Activated naive CD4-positive, alpha-beta T cell treated with anti-CD3 and anti-CD28 coated beads for 36 hours (primary cell): ENCODE measurements at regions of chr1 and their contacts with region 1.

Region 1: DNA sequence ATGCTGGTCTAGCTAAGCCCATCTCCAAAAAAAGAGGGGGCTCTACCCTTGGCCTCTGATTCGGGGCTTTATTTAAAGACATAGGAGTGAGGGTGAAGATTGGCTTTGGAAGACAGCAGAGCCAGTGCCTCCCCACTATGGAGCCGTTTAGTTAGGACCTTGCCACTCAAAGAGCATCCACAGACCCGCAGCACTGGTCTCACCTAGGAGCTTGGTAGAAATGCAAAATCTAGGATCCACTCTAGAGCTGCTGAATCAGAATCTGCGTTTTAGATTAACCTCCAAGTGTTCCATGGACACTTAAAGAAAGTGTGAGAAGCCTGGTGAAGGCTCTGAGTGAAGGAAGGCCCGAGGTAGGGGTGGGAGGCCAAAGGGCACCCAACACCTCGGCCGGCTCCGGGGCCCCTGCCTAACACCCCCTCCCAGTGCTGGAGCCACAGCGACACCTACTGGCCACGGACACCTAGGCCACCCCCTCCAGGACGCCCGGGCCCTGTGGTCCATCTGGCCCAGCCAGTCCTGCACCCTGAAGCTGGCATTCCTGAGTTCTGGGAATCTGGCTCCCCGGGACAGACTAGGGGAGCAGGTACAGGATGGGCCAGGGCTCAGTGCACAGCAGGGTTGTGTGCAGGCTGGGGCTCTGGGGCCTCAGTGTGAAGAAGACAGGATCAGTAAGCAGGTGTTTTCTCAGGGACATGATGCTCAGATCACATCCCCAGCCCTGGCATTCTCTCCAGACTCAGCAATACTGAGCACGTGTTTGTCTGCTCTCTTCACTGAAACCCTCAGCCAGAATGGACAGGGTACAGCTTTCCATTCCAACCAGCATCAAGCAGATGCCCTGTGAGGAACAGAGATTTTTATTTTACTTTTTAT is 79.2 kb downstream of the TMEM53 start:
- DNase-seq: peak; percentile 88
- H3K4me3 Mint-ChIP-seq: no peak overlapping the region
- H3K27ac Mint-ChIP-seq: no peak overlapping the region
- H3K4me1 Mint-ChIP-seq: no peaks in the 10 kb centered on the region
- H3K27me3 Mint-ChIP-seq: peaks cover 2% of the 10 kb centered on the region

Region 2: DNA sequence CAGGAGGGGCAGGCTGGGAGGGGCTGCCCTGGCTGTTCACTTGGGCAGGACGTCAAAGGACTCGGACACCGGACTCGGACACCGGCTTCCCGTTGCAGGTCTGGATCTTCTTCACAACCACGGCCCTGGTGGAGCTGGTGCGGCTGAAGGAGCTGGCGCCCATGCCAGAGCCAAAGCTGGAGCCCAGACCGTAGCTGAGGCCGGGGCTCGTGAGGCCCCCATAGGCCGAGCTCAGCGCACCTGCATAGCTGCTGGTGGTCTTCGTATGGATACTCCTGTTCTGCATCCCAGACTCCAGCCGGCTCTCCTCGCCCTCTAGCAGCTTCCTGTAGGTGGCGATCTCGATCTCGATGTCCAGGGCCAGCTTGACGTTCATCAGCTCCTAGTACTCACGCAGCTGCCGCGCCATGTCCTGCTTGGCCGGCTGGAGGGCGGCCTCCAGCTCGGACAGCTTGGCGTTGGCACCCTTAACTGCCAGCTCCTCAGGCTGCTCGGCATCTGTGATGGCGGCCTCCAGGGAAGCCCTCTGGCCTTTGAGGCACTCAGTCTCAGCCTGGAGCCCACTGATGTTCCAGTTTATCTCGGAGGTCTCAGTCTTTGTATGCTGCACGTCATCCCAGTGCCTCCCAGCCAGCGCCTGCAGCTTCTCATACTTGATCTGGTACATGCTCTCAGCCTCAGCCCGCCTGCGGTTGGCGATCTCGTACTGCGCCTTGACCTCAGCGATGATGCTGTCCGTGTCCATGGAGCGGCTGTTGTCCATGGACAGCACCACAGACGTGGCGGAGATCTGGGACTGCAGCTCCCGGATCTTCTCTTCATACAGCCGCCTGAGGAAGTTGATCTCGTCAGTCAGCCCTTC is 491.6 kb before region 1 on chr1:
- CTCF ChIA-PET with region 1: no interaction called
- intact Hi-C with region 1: loop called (anchors 10 kb)
- DNase-seq: peak; percentile 13
- H3K4me3 Mint-ChIP-seq: no peak overlapping the region
- H3K27ac Mint-ChIP-seq: no peak overlapping the region
- H3K4me1 Mint-ChIP-seq: no peaks in the 10 kb centered on the region
- H3K27me3 Mint-ChIP-seq: peaks cover 8% of the 10 kb centered on the region

Region 3: DNA sequence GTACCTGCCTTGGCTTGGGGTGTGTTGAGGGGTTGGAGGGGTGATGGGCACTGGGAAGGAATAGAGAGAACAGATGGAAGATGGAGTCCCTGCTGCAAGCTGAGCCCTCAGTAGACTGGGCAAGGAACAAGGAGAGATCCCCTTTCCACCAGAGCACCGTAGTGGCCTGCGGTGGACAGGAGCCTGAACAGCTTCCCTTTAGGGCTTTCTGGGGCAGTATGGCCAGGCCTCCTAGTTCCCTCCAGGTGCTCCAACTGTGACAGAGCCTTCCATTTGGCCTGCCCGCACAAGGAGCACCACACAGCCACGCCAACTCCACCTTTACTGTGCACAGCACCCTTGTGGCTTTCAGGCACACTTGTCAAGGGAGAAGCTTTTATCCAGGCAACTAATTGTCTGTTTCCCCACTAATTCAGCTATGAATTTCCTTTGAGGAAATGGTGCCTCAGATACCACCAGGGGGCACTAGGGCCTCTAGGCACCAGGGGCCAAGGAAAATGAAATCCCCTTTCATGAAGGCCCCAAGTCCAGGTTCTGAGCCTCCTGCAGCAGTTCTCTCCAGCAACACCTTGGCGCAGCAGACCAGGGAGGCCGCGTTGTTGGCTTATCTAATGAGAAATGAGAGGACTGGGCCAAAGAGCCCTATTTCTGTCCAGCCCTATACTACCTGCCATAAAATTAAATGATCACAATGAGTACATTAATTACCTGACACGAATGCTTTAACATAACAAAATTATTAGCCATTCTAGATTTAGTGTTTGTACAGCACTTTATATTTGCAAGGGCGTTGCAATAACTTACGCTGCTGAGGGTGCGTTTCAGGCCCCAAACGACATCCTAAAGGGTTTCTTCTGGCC is 217.0 kb before region 1 on chr1:
- CTCF ChIA-PET with region 1: interaction called, 43 read pairs
- intact Hi-C with region 1: loop called (anchors 1 kb)
- DNase-seq: peak; percentile 73
- H3K4me3 Mint-ChIP-seq: no peak overlapping the region
- H3K27ac Mint-ChIP-seq: no peak overlapping the region
- H3K4me1 Mint-ChIP-seq: no peaks in the 10 kb centered on the region
- H3K27me3 Mint-ChIP-seq: no peaks in the 10 kb centered on the region

Region 4: GRCh38 chr1:44405041-44405797 is 189.9 kb before region 1 on chr1 and contains the start of gene RNF220:
- CTCF ChIA-PET with region 1: interaction called, 3 read pairs
- intact Hi-C with region 1: loop called (anchors 10 kb)
- DNase-seq: peak; percentile 64
- H3K4me3 Mint-ChIP-seq: peak within 1 kb of the TSS; percentile 79
- H3K27ac Mint-ChIP-seq: peak within 1 kb of the TSS; percentile 22
- H3K4me1 Mint-ChIP-seq: peaks cover 30% of the 10 kb centered on the region
- H3K27me3 Mint-ChIP-seq: peaks cover 70% of the 10 kb centered on the region
- total RNA-seq, gene RNF220: 71.6 to 81.6 TPM

Region 5: DNA sequence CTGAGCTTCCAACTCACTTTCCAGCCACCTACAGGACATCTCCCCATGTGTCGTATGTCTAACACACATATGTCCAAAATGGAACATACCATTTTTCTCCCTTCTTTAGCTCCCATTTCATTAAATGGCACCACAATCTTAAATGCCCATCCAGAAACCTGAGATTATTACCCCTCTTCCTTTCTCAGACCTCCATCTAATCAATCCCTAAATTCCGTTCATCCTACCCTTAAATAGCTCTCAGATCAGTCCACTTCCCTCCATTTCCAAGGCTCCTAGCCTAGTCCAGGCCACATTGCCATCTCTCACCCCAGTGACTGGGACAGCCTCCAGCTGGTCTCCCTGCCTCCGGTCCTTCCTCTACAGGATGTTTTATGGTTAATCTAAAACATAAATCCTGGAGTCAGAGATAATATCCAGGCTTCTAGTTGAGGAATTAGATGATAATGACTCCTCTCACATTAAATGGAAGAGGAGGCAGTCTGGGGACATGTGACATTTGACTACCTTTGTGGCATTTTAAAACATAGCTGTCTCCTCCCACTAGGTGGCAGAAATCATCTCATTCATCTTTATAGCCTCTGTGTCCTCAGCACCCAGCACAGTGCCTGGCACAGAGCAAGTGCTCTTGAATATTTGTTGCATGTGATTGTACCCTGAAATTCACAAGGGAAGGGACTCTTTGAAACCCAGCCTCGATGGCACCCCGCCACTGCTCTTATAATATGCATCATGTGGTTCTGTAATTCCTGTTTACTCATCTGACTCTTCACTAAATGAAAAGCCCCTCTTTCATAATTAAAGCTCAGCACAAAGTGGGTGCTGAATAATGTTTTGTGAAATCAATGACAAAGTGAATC is 23.2 kb before region 1 on chr1:
- CTCF ChIA-PET with region 1: interaction called, 19 read pairs
- intact Hi-C with region 1: no loop called
- DNase-seq: peak; percentile 33
- H3K4me3 Mint-ChIP-seq: no peak overlapping the region
- H3K27ac Mint-ChIP-seq: no peak overlapping the region
- H3K4me1 Mint-ChIP-seq: no peaks in the 10 kb centered on the region
- H3K27me3 Mint-ChIP-seq: peaks cover 6% of the 10 kb centered on the region

Region 6: GRCh38 chr1:45393718-45394302 is 798.7 kb after region 1 on chr1:
- CTCF ChIA-PET with region 1: no interaction called
- intact Hi-C with region 1: no loop called
- DNase-seq: peak; percentile 53
- H3K4me3 Mint-ChIP-seq: no peak overlapping the region
- H3K27ac Mint-ChIP-seq: peak overlapping the region; percentile 82
- H3K4me1 Mint-ChIP-seq: peaks cover 17% of the 10 kb centered on the region
- H3K27me3 Mint-ChIP-seq: no peaks in the 10 kb centered on the region